IMR-90 (cell line): ENCODE measurements at regions of chr17 and their contacts with region 1.

Region 1: DNA sequence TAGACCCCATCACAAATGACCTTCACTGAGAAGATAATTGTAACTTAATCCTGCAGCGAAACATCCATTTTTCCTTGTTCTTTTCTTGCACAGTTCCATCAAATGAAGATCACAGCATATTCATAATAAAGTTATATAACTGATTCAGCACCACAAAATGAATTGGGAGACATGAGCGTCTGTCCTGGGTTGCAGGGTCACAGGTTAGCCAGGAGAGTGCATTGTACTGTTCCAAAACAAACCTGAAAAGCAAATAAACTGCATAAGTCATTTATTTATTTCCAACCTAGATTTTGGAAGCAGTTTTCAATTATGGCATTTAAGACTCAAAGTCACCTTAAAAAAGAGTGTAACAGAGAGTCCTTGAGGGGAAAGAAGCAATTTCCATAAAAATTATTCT is 18.6 kb upstream of the INTS2 start:
- DNase-seq: no peak
- ATAC-seq: no peak
- H3K4me3 ChIP-seq: no peak overlapping the region
- H3K27ac ChIP-seq: no peak overlapping the region
- H3K4me1 ChIP-seq: no peaks in the 10 kb centered on the region
- H3K27me3 ChIP-seq: no peaks in the 10 kb centered on the region
- CTCF ChIP-seq: no peak
- POLR2A ChIP-seq: no peak
- RAD21 ChIP-seq: no peak

Region 2: GRCh38 chr17:61188081-61188480 is 758.3 kb before region 1 on chr17:
- CTCF ChIA-PET with region 1: no interaction called
- POLR2A ChIA-PET with region 1: no interaction called
- dilution Hi-C with region 1: no loop called
- in situ Hi-C with region 1: no loop called
- intact Hi-C with region 1: no loop called
- DNase-seq: no peak
- ATAC-seq: no peak
- H3K4me3 ChIP-seq: no peak overlapping the region
- H3K27ac ChIP-seq: no peak overlapping the region
- H3K4me1 ChIP-seq: no peaks in the 10 kb centered on the region
- H3K27me3 ChIP-seq: no peaks in the 10 kb centered on the region
- CTCF ChIP-seq: no peak
- POLR2A ChIP-seq: no peak
- RAD21 ChIP-seq: no peak

Region 3: GRCh38 chr17:61981323-61981722 is 35.0 kb after region 1 on chr17:
- CTCF ChIA-PET with region 1: no interaction called
- POLR2A ChIA-PET with region 1: no interaction called
- dilution Hi-C with region 1: no loop called
- in situ Hi-C with region 1: no loop called
- intact Hi-C with region 1: loop called (anchors 5 kb)
- DNase-seq: peak; percentile 62
- ATAC-seq: peak; percentile 57; the same call in 1 of the 2 replicates
- H3K4me3 ChIP-seq: no peak overlapping the region
- H3K27ac ChIP-seq: no peak overlapping the region
- H3K4me1 ChIP-seq: no peaks in the 10 kb centered on the region
- H3K27me3 ChIP-seq: no peaks in the 10 kb centered on the region
- CTCF ChIP-seq: no peak
- POLR2A ChIP-seq: no peak
- RAD21 ChIP-seq: no peak